Natural killer cell (primary cell): ENCODE measurements at regions of chr22 and their contacts with region 1.

Region 1: DNA sequence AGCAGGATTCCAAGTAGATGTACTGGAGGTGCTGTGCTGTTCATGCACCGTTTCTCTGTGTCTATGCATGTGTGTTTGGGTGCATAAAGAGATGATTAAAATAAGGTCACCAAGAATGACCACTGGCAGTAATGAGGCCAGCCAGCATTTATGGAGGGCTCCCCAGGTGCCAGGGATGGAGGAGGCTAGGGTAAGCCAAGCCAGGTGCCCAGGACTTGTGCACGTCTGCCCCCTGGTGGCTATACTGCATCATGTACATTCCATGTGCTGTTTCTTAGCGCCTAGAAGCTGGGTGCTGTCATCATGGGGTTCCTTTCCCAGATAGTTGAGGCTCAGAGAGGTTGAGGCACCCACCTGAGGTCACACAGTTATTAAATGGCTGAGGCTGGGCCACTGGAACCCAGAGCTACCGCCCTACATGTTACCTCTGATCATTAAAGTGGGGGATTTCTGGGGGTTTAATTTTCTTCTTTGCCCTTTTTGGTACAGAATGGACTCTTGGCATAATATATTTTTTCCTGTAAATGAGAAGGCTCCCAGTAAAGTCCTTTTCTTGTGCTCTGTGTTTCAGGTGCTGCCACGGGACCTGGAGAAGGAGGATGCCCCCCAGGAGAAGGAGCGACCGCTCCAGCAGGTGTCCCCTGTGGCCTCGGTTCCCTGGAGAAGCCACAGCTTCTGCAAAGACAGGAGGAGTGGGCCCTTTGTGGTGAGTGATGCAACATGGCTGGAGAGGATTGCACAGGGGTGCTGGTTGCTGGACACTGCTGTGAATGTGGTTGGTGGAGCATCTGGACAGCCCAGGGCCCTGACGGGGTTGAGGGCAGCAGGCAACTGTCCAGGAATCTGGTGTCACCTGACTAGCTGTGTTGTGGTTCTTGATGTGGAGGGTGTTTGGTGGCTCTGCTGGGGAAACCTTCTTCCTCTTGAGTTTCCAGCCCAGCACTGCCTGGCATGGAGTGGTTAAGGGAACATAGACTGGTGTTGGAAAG is 96.4 kb downstream of the KIAA1671 start:
- DNase-seq: peak; percentile 70 to 88
- ATAC-seq: peak; percentile 80 to 99 (median 98)
- H3K4me3 ChIP-seq: no peak overlapping the region
- H3K4me3 Mint-ChIP-seq: no peak overlapping the region
- H3K27ac ChIP-seq: no peak overlapping the region
- H3K27ac Mint-ChIP-seq: no peak overlapping the region
- H3K4me1 ChIP-seq: peaks cover under 1% of the 10 kb centered on the region
- H3K4me1 Mint-ChIP-seq: peaks cover 2% of the 10 kb centered on the region in 2 donors
- H3K27me3 ChIP-seq: no peaks in the 10 kb centered on the region
- H3K27me3 Mint-ChIP-seq: peaks cover 11 to 25% of the 10 kb centered on the region in 2 donors
- CTCF ChIP-seq: peak; percentile 74

Region 2: DNA sequence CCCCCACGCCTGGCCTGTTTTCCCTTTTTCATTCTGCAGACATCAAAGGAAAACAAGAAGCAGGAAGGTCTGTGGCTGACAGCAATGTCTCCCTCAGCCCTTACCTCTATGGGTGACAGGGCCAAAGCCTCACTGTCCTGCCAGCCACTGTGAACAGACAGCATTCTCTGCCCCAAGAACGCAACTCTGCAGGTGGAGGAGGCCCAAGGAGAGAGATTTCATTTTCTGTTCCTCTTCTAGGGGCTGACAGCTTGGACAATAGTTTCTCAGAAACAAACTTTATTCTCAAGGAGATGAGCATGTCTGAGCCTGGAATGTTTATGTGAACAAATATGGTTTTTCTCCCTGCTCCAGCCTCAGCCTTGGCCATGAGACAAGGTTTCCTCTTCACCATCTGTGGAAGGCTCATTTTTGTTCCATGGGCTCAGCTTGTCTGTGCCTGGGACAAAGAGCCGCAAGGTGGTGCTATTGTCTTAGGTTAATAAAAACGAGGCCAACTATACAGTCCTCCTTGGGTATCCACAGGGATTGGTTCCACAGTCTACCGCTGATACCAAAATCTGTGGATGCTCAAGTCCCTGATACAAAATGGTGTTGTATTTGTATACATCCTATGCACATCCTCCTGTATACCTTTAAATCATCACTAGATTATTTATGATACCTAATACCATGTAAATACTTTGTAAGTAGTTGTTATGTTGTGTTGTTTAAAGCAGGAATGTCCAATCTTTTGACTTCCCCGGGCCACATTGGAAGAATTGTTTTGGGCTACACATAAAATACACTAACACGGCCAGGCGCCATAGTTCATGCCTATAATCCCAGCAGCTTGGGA is 280.2 kb before region 1 on chr22:
- intact Hi-C with region 1: loop called (anchors 1 kb)
- DNase-seq: peak; percentile 37 to 66
- ATAC-seq: peak in 2 of 3 donors; percentile 76 to 80
- H3K4me3 ChIP-seq: no peak overlapping the region
- H3K4me3 Mint-ChIP-seq: no peak overlapping the region
- H3K27ac ChIP-seq: no peak overlapping the region
- H3K27ac Mint-ChIP-seq: no peak overlapping the region
- H3K4me1 ChIP-seq: no peaks in the 10 kb centered on the region
- H3K4me1 Mint-ChIP-seq: no peaks in the 10 kb centered on the region
- H3K27me3 ChIP-seq: no peaks in the 10 kb centered on the region
- H3K27me3 Mint-ChIP-seq: peaks cover 9 to 12% of the 10 kb centered on the region in 2 donors
- CTCF ChIP-seq: peak; percentile 68

Region 3: DNA sequence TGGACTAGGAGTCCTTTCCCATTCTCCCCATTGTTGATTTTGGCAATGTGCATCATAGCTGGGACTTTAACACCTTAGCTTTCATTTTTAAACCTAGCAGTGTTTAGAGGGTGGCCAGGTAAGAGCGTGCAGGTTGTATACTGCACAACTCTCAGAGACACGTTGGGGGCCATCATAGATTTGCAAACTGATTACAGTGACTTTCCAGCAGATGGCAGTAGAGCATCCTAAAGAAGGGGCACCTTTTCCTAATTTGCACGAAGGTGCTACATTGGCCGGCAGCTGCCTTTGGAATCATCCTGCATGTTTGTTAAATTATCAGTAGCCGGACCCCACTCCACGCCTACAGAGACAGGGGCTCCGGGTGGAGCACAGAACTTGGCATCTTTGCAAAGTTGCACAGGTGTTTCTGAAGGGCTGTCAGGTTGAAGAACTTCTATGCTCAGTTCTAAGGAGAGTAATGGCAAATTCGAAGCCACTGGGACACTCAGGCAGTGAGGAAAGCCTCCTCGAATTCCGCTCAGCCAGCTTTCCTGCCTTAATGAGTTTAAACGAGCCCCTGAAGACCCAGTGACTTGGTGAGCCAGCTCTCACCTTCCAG is 110.1 kb before region 1 on chr22:
- intact Hi-C with region 1: loop called (anchors 1 kb)
- DNase-seq: peak in 1 of 2 donors; percentile 72
- ATAC-seq: peak; percentile 54 to 75 (median 63)
- H3K4me3 ChIP-seq: no peak overlapping the region
- H3K4me3 Mint-ChIP-seq: no peak overlapping the region
- H3K27ac ChIP-seq: no peak overlapping the region
- H3K27ac Mint-ChIP-seq: no peak overlapping the region
- H3K4me1 ChIP-seq: no peaks in the 10 kb centered on the region
- H3K4me1 Mint-ChIP-seq: no peaks in the 10 kb centered on the region
- H3K27me3 ChIP-seq: no peaks in the 10 kb centered on the region
- H3K27me3 Mint-ChIP-seq: peaks cover 1 to 5% of the 10 kb centered on the region in 2 donors
- CTCF ChIP-seq: peak; percentile 85

Region 4: GRCh38 chr22:24951942-24952836 is 96.8 kb before region 1 on chr22 and contains the start of gene KIAA1671:
- intact Hi-C with region 1: loop called (anchors 1 kb)
- DNase-seq: peak; percentile 86 to 91
- ATAC-seq: peak; percentile 91 to 92 (median 91)
- H3K4me3 ChIP-seq: peak within 1 kb of the TSS; percentile 53
- H3K4me3 Mint-ChIP-seq: peak within 1 kb of the TSS; percentile 77
- H3K27ac ChIP-seq: no peak within 1 kb of the TSS
- H3K27ac Mint-ChIP-seq: peak within 1 kb of the TSS in 1 of 2 donors; percentile 89
- H3K4me1 ChIP-seq: peaks cover 29% of the 10 kb centered on the region
- H3K4me1 Mint-ChIP-seq: peaks cover 12 to 30% of the 10 kb centered on the region in 2 donors
- H3K27me3 ChIP-seq: peaks cover 16% of the 10 kb centered on the region
- H3K27me3 Mint-ChIP-seq: peaks cover 52 to 72% of the 10 kb centered on the region in 2 donors
- CTCF ChIP-seq: peak; percentile 98
- total RNA-seq, gene KIAA1671: 3.6 to 24.0 (median 7.3) TPM

Region 5: DNA sequence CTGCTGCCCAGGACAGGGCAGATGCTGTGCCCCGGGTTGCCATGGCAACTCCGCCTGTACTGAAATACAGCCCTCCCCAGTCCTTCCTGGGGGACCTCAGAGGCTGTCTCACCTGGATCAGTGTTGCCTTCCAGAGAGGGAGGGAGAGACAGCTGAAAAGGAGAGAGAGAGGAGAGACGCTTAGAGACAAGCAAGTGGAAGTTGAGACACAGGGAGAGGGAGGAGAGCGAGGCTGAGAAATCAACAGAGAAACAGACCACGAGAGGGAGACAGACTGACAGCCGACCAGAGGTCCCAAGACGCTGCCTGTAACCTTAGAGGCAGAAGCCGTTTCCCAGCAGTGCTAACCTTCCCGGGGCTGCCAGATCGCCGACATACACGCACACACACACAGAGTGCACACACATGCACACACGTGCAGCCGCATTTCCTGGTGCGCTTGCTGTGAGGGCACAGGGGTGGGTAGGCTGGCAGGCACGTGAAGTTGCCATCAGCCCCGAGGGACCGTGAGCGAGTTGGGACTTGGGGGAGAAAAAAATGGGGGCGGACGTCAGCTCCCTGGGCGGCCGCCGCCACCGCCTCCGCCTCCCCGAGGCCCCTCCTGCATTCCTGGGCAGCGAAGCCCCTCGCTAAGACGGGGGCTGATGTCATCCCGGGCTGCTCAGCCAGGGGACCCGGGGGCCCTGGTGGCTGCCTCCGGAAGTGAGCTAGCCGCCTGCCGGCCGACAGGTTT is 62.1 kb after region 1 on chr22:
- intact Hi-C with region 1: no loop called
- DNase-seq: peak; percentile 40 to 80
- ATAC-seq: peak; percentile 80 to 90 (median 85)
- H3K4me3 ChIP-seq: peak overlapping the region; percentile 44
- H3K4me3 Mint-ChIP-seq: peak overlapping the region; percentile 89
- H3K27ac ChIP-seq: no peak overlapping the region
- H3K27ac Mint-ChIP-seq: peak overlapping the region; percentile 49 to 90
- H3K4me1 ChIP-seq: peaks cover 18% of the 10 kb centered on the region
- H3K4me1 Mint-ChIP-seq: peaks cover 19 to 24% of the 10 kb centered on the region in 2 donors
- H3K27me3 ChIP-seq: no peaks in the 10 kb centered on the region
- H3K27me3 Mint-ChIP-seq: peaks cover 0 to 8% of the 10 kb centered on the region in 2 donors
- CTCF ChIP-seq: peak; percentile 46